Dorsolateral prefrontal cortex (tissue), 120 donors: ENCODE measurements at regions of chr4 and their contacts with region 1.

Region 1: DNA sequence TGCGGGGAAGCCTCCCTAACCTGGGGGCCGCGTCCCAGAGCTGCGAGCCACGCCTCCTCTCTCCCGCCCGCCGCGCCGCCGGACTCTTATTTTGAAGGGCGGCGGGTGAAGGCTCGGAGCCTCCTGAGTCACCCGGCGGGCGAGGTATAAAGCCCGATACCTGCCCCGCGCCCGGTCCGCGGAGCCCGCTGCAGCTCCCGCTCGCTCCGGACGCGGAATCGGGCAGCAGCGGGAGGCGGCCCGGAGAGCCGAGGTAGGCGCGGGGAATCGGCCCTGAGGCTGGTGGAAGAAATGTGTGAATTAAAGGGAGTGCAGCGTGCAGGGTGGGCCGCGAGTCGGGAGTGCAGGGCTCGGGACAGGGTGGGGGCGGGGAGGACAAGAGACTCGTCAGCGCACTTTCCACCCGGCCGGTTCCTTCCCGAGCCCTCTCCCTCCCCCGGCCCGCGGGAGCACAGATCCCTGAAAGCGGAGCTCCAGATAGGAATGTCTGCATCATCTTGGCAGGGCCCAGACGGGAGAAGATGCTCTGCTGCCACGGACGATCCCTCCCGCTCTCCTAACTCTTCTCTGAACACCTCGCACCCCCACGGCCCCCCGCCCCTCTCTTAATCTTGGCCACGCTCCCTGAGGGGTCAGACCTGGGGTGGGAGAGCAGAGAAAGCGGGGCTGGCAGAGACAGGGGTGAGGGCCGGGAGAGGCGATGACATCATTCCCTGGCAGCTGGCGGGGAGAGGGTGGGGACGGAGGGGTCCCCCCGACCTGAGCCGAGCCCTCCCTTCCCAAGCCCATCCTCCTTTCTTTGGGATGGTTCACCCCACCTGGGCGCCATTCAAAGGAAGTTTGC is 177.9 kb downstream of the CBR4 start:
- DNase-seq: peak in 9 of 10 donors; percentile 28 to 77 (median 61)
- H3K4me3 ChIP-seq: peak overlapping the region; percentile 47 to 86 (median 73)
- H3K27ac ChIP-seq: peak overlapping the region in 56 of 59 donors; percentile 20 to 93 (median 84)
- H3K27me3 ChIP-seq: peaks cover 0 to 38% (median 6%) of the 10 kb centered on the region in 45 donors
- CTCF ChIP-seq: no peak

Region 2: DNA sequence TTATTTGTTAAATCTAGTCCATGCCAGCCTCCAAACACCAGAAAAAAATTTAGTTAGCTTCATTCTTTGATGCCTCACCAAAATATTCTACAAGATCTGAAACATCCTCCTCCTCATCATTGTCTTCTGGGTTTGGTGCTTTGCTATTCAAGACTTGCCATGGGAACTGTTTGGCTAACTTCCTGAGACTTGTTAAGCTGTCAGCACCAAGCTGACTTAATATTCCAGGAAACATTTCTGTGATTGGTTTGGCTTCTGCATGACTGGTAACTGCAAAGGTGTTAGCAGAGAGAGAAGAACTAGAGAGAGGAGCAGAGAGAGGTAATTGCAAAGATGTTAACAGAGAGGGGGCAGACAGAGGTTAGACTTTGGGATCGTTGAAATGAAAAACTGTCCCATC is 233.9 kb before region 1 on chr4:
- intact Hi-C with region 1: no loop called
- DNase-seq: no peak
- H3K4me3 ChIP-seq: no peak overlapping the region
- H3K27ac ChIP-seq: no peak overlapping the region
- H3K27me3 ChIP-seq: peaks cover 0 to 4% (median 0%) of the 10 kb centered on the region in 45 donors
- CTCF ChIP-seq: no peak

Region 3: DNA sequence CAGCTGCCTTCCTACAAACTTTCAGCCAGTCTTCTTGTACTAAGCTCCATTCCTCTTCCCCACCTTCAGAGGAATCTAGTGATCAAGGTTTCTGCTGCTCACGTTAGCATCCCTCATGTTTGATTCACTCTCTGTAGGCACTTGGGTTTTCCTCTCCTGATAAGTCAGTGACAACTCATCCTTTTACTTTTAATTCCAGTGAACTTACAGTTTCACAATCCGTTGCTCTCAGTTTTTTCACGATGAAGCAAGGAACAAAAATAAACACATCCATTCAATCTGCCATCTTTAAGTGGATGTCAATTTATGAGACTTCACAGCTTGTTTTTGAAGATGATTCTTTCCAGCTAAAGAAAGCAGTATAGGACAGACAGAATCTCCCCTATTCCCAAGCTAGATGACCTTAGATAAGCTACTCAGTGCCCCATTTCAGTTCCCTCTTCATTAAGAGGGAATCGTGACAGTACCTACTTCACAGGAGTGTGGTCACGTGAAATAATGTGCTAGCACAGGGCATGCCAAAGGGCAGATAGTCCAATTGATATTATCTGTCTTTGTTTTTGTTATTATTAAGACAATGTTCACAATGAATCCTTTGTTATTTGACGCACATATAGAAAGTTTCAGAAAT is 101.0 kb before region 1 on chr4:
- intact Hi-C with region 1: loop called in 1 of 2 experiments (anchors 10 kb)
- DNase-seq: no peak
- H3K4me3 ChIP-seq: no peak overlapping the region
- H3K27ac ChIP-seq: no peak overlapping the region
- H3K27me3 ChIP-seq: peaks cover 0 to 24% (median 0%) of the 10 kb centered on the region in 45 donors
- CTCF ChIP-seq: no peak

Region 4: DNA sequence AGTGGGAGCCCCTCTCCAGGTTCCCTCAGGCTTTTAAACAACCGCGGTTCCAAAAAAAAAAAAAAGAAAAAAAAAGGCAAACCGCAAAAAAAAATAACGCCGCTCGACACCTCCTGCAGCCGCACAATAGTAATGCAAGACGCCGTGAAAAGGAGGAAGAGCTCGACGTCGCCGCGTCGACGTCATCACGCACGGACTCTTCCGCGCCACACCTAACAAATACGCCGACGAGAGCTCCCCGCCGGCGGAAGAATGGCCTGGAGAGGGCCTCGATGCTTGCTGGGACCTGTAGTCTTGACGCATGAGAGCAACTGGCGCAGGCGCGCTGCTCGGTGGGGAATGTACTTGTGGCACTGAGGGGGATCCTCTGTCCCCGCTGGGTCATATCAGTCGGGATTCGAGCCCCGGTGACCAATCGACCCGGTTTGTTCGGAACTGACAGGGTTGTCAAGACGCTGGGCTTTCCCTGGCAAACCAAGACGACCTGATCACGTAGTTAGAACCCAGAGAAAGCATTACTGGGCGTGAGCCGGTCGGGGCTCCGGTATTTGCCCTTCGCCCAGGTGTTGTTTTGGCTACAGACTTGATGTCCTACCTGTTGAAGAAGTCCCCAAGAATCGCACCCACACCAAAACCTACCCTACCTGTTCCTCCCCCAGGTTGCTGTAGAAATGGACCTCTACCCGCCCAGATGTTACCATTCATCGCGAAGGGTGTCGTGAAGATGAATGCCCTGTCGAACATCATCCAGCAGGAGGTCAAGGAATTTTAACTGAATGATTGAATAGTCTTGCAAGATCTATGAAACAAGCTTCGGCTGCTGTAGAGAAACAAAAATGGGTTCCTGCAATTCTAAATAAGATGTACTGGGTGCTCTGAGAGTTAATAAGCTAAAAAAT is 178.2 kb after region 1 on chr4 and contains the start of gene CBR4:
- intact Hi-C with region 1: no loop called
- DNase-seq: peak; percentile 98 to 99 (median 99)
- H3K4me3 ChIP-seq: peak within 1 kb of the TSS; percentile 62 to 95 (median 83)
- H3K27ac ChIP-seq: peak within 1 kb of the TSS; percentile 46 to 98 (median 91)
- H3K27me3 ChIP-seq: no peaks in the 10 kb centered on the region
- CTCF ChIP-seq: peak in 41 of 56 donors; percentile 15 to 67 (median 40)
- total RNA-seq, gene CBR4: 23.5 to 42.3 (median 31.8) TPM